ENCODE measurements at regions of chr16 and their contacts with region 1.

Region 1: DNA sequence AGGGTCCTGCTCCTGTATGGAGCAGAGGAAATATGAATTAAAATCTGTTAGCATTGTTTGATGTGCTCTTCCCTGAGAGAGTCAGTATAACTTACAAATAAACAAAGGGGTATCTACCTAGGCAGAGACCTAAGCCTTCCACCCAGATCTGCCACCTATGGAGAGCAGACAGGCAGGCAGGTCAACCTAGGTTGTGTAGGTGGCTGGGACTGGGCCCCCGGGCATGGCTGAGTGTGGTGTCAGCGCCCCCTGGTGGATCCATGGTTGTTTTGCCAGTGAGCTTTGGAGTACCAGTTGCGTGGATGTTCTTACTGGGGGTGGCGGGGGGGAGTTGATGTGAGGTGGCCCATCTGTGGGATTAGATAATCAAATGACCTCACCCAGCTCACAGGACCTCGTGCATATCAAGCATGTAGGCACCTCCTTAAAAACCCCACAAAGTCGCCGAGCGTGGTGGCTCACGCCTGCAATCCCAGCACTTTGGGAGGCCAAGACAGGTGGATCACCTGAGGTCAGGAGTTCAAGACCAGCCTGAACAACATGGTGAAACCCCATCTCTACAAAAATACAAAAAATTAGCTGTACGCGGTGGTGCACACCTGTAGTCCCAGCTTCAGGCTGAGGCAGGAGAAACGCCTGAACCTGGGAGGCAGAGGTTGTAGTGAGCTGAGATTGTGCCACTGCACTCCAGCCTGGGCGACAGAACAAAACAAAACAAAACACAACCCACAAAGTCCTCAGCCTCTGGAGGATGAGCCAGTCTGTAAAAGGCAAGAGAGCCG is 17.6 kb downstream of the DUS2 start:
- DNase-seq: peak; percentile 63 to 97 (median 84)

Region 2: GRCh38 chr16:67883872-67884261 is 156.8 kb before region 1 on chr16:
- intact Hi-C with region 1: loop called (anchors 1 kb)
- DNase-seq: peak in 9 of 10 donors; percentile 49 to 95 (median 62)